GM18951 (cell line): ENCODE measurements at regions of chr11 and their contacts with region 1.

Region 1: GRCh38 chr11:117946842-117947526 is 17.8 kb upstream of the TMPRSS13 start:
- POLR2A ChIP-seq: no peak

Region 2: DNA sequence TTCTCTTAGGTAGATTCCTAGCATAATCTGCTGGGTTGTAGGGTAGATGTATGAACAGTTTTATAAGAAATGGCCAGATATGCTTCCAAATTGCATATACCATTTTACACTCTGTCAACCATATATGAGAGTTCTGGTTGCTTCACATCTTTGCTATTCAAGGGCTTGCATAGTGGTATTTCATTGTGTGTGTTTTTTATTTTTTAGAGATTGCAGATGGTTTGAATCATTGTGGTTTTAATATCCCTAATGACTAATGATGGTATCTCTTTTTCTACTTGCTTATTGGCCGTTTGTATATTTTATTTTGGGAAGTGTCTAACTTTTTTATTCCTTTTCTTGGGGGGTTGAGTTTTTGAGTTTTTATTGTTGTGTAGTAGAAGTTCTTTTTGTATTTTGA is 687.6 kb before region 1 on chr11:
- in situ Hi-C with region 1: no loop called
- POLR2A ChIP-seq: no peak

Region 3: DNA sequence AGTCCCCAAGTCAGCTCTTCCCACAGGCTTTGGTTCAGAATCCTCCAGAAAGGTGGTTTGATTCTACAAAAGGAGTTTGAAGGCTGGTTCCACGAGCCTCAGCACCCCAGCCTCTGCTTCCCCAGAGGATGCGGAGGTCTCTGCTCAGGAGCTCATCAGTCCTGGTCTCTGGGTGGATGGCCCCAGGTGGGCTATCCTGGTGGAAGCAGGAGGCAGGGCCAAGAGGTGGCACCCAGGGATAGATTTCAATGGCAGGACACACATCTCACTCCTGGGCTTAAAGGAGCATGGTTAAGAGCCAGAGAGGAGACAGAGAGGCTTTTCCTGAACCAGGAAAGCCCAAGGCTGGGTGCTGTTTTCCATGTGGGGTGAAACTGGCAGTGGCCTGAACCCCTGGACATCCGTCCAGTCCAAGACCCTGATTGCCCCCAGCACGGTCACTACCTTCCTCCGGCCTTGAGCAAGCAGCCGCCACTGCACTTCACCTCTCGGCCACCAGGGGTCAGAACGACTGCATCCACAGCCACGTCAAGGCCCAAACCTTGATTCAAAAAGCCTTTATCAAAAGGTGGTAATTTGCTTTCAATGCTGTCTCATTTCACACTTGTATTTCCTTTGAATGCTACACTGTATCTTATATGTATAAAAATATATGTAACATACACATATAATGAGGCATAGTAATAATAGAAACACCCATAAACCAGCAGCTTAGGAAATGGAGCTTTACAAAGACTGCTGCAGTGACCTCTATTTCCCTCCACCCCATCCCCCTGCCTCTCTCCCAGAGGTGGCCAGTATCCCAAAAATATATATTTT is 103.1 kb before region 1 on chr11:
- in situ Hi-C with region 1: loop called (anchors 5 kb)
- POLR2A ChIP-seq: no peak

Region 4: DNA sequence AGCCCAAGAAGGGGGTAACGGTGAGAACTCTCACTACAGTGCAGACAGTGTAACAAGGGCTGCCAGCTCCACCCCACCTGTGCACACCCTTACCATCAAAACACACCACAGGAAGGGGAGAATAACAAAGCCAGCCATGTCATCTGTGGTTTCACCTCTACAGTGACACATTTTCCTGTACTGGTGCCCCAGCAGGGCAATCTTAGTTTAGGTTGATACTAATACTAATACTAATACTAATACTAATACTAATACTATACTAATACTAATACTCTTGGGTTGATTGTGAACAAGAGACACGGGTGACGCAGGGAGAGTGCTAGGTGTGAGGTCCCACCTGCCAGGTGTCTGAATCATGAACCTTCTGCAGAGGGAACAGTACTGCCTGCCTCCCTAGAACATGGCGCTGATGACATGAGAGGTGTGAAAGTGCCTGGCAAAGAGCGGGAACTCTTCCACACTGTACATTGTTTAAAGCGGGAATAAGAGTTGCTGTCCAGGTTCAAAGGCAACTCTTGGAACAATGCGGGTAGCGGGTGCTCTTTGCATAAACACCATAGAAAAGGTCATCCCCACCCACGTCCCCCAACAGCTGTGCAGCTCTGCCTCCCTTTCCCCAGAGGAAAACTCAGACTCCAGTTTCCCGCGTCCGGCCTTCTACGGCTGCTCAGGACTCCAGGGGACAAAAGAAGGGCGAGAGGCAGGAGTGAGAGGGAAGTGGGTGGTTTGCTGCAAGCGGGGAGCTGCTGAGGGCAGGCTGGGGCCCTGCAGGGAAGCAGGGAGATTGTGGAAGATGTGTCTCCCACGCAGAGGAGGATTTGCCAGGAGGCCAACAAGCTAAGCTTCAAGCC is 104.9 kb after region 1 on chr11:
- in situ Hi-C with region 1: loop called (anchors 5 kb)
- POLR2A ChIP-seq: no peak